MCF 10A (cell line): ENCODE measurements at regions of chr10 and their contacts with region 1.

Region 1: GRCh38 chr10:73096449-73097304 is at the start of gene P4HA1:
- DNase-seq: peak; percentile 95
- H3K4me3 Mint-ChIP-seq: peak within 1 kb of the TSS; percentile 85
- H3K27ac Mint-ChIP-seq: peak within 1 kb of the TSS; percentile 92
- H3K4me1 Mint-ChIP-seq: no peaks in the 10 kb centered on the region
- H3K27me3 Mint-ChIP-seq: no peaks in the 10 kb centered on the region
- CTCF ChIP-seq: peak; percentile 49
- total RNA-seq, gene P4HA1: 23.9 and 25.2 TPM in 2 replicates

Region 2: GRCh38 chr10:71486484-71487114 is 1610.1 kb before region 1 on chr10:
- CTCF ChIA-PET with region 1: no interaction called
- POLR2A ChIA-PET with region 1: no interaction called
- intact Hi-C with region 1: no loop called
- DNase-seq: peak; percentile 54
- H3K4me3 Mint-ChIP-seq: no peak overlapping the region
- H3K27ac Mint-ChIP-seq: no peak overlapping the region
- H3K4me1 Mint-ChIP-seq: no peaks in the 10 kb centered on the region
- H3K27me3 Mint-ChIP-seq: peaks cover 58% of the 10 kb centered on the region
- CTCF ChIP-seq: peak; percentile 52

Region 3: GRCh38 chr10:73083221-73083620 is 13.5 kb before region 1 on chr10:
- CTCF ChIA-PET with region 1: interaction called, 6 read pairs
- POLR2A ChIA-PET with region 1: interaction called, 52 read pairs
- intact Hi-C with region 1: no loop called
- DNase-seq: no peak
- H3K4me3 Mint-ChIP-seq: no peak overlapping the region
- H3K27ac Mint-ChIP-seq: peak overlapping the region; percentile 41
- H3K4me1 Mint-ChIP-seq: peaks cover 18% of the 10 kb centered on the region
- H3K27me3 Mint-ChIP-seq: no peaks in the 10 kb centered on the region
- CTCF ChIP-seq: no peak

Region 4: GRCh38 chr10:73117976-73118743 is 21.5 kb after region 1 on chr10:
- CTCF ChIA-PET with region 1: interaction called, 5 read pairs
- POLR2A ChIA-PET with region 1: interaction called, 64 read pairs
- intact Hi-C with region 1: no loop called
- DNase-seq: peak; percentile 83
- H3K4me3 Mint-ChIP-seq: peak overlapping the region; percentile 39
- H3K27ac Mint-ChIP-seq: peak overlapping the region; percentile 77
- H3K4me1 Mint-ChIP-seq: peaks cover 12% of the 10 kb centered on the region
- H3K27me3 Mint-ChIP-seq: no peaks in the 10 kb centered on the region
- CTCF ChIP-seq: no peak

Region 5: GRCh38 chr10:73136627-73137026 is 40.0 kb after region 1 on chr10:
- CTCF ChIA-PET with region 1: interaction called, 7 read pairs
- POLR2A ChIA-PET with region 1: interaction called, 23 read pairs
- intact Hi-C with region 1: loop called (anchors 5 kb)
- DNase-seq: no peak
- H3K4me3 Mint-ChIP-seq: no peak overlapping the region
- H3K27ac Mint-ChIP-seq: no peak overlapping the region
- H3K4me1 Mint-ChIP-seq: peaks cover 6% of the 10 kb centered on the region
- H3K27me3 Mint-ChIP-seq: no peaks in the 10 kb centered on the region
- CTCF ChIP-seq: no peak

Region 6: DNA sequence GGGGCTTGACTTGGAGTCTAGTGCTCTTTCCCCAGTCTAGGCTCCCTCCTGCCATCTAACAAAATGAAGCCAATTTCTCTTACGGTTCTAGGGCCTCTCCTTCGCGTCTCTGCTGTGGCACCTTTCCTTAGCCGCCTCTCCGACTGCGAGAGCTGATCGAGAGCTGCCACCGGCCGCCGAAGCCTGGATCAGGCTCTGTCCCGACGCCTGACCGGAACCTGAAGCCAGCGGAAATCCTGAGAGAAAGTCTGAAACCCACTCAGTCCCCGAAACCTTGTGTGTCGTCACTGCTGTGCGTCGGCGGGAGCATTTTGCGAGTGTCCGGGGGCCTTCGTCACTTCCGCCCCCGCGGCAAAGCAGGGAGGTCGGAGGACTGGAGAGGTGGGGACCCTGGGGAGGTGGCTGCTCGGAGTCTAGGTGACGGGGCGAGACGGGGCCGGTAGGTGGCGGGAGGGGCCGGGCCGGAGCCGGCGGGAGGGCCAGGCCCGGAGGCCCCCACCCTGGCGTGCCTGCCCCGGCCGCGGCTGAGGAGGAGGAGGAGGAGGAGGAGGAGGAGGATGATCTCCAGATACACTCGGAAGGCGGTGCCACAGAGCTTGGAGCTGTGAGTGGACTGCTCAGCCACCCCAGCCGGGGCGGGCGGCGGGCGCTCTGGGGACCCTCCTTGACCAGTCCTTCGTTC is 71.2 kb after region 1 on chr10 and contains the starts of genes ECD and FAM149B1:
- CTCF ChIA-PET with region 1: interaction called, 5 read pairs
- POLR2A ChIA-PET with region 1: interaction called, 44 read pairs
- intact Hi-C with region 1: no loop called
- DNase-seq: peak; percentile 93
- H3K4me3 Mint-ChIP-seq: peak within 1 kb of the TSS; percentile 92
- H3K27ac Mint-ChIP-seq: peak within 1 kb of the TSS; percentile 99
- H3K4me1 Mint-ChIP-seq: peaks cover 20% of the 10 kb centered on the region
- H3K27me3 Mint-ChIP-seq: no peaks in the 10 kb centered on the region
- CTCF ChIP-seq: no peak
- total RNA-seq, gene ECD: 29.9 and 31.5 TPM in 2 replicates
- total RNA-seq, gene FAM149B1: 22.8 and 27.7 TPM in 2 replicates

Region 7: GRCh38 chr10:73182568-73182967 is 85.9 kb after region 1 on chr10:
- CTCF ChIA-PET with region 1: no interaction called
- POLR2A ChIA-PET with region 1: no interaction called
- intact Hi-C with region 1: no loop called
- DNase-seq: no peak
- H3K4me3 Mint-ChIP-seq: no peak overlapping the region
- H3K27ac Mint-ChIP-seq: no peak overlapping the region
- H3K4me1 Mint-ChIP-seq: no peaks in the 10 kb centered on the region
- H3K27me3 Mint-ChIP-seq: no peaks in the 10 kb centered on the region
- CTCF ChIP-seq: no peak

Region 8: DNA sequence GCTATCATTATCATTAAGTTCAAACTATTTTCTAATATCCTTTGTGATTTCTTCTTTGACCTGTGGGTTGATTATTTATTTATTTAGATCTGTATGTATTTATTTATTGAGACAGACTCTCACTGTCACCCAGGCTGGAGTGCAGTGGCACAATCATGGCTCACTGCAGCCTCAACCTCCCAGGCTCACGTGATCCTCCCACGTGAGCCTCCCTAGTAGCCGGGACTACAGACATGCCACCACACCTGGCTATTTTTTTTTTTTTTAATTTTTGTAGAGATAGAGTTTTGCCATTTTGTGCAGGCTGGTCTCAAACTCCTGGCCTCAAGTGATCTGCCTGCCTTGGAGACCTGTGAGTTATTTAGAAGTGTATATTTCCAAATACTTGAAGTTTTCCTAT is 184.4 kb after region 1 on chr10:
- CTCF ChIA-PET with region 1: no interaction called
- POLR2A ChIA-PET with region 1: no interaction called
- intact Hi-C with region 1: no loop called
- DNase-seq: no peak
- H3K4me3 Mint-ChIP-seq: no peak overlapping the region
- H3K27ac Mint-ChIP-seq: no peak overlapping the region
- H3K4me1 Mint-ChIP-seq: no peaks in the 10 kb centered on the region
- H3K27me3 Mint-ChIP-seq: no peaks in the 10 kb centered on the region
- CTCF ChIP-seq: no peak